Activated CD4-positive, alpha-beta memory T cell treated with anti-CD3 and anti-CD28 coated beads, Interleukin-2, amount 10 ng/mL, durations not matched to agents 7 days and 5 days (primary cell): ENCODE measurements at regions of chr14 and their contacts with region 1.

Region 1: GRCh38 chr14:103899316-103899715 is 28.9 kb upstream of the TDRD9 start:
- DNase-seq: no peak
- H3K4me3 Mint-ChIP-seq: no peak overlapping the region
- H3K27ac Mint-ChIP-seq: no peak overlapping the region
- H3K4me1 Mint-ChIP-seq: peaks cover 3% of the 10 kb centered on the region
- H3K27me3 Mint-ChIP-seq: no peaks in the 10 kb centered on the region

Region 2: GRCh38 chr14:103808403-103809001 is 90.8 kb before region 1 on chr14:
- CTCF ChIA-PET with region 1: interaction called, 30 read pairs
- POLR2A ChIA-PET with region 1: no interaction called
- DNase-seq: peak; percentile 66
- H3K4me3 Mint-ChIP-seq: no peak overlapping the region
- H3K27ac Mint-ChIP-seq: no peak overlapping the region
- H3K4me1 Mint-ChIP-seq: peaks cover 13% of the 10 kb centered on the region
- H3K27me3 Mint-ChIP-seq: no peaks in the 10 kb centered on the region

Region 3: DNA sequence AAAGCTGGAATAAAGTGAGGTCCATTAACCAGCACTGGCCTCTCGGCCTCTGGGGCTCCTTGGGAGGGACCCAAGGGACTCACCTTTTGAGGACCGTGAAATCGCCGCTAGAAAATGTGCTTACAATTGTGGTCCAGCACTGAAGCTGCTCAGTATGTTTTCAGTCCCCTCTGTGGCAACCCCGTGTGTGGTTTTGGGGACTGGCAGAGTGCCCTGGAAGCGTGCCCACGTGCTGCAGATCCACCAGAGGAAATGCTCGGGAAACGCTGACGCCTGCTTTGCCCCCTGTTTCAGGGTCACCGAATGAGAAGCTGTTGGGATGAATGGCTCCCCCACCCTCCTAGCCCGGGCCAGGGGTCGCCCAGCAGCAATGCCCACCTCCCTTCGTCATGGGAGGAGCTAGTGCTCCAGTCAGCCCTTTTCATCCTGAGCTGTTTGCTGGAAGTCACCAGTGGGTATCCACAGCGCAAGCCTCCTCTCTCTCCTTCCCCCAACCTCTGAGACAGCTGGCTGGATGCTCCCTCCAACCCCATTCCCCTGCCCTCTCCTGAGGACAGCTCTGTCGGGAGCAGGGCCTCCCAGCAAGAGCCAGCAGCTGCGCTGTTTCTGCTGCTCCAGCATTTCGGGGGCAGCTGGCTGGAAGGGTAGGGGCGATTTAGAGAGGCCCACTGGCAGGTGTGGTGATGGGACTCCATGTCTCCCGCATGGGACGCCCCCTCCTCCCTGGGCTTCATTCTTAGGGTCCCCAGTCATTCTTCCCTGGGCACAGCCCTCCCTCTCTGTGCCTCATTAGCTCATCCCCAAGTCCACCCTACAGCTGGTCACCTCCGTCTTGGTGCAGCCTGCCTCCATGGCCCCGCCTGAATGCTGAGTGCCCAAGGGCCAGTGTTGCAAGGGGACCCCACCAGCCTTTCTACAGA is 18.7 kb before region 1 on chr14:
- CTCF ChIA-PET with region 1: interaction called, 20 read pairs
- POLR2A ChIA-PET with region 1: no interaction called
- DNase-seq: no peak
- H3K4me3 Mint-ChIP-seq: no peak overlapping the region
- H3K27ac Mint-ChIP-seq: no peak overlapping the region
- H3K4me1 Mint-ChIP-seq: peaks cover 9% of the 10 kb centered on the region
- H3K27me3 Mint-ChIP-seq: no peaks in the 10 kb centered on the region

Region 4: DNA sequence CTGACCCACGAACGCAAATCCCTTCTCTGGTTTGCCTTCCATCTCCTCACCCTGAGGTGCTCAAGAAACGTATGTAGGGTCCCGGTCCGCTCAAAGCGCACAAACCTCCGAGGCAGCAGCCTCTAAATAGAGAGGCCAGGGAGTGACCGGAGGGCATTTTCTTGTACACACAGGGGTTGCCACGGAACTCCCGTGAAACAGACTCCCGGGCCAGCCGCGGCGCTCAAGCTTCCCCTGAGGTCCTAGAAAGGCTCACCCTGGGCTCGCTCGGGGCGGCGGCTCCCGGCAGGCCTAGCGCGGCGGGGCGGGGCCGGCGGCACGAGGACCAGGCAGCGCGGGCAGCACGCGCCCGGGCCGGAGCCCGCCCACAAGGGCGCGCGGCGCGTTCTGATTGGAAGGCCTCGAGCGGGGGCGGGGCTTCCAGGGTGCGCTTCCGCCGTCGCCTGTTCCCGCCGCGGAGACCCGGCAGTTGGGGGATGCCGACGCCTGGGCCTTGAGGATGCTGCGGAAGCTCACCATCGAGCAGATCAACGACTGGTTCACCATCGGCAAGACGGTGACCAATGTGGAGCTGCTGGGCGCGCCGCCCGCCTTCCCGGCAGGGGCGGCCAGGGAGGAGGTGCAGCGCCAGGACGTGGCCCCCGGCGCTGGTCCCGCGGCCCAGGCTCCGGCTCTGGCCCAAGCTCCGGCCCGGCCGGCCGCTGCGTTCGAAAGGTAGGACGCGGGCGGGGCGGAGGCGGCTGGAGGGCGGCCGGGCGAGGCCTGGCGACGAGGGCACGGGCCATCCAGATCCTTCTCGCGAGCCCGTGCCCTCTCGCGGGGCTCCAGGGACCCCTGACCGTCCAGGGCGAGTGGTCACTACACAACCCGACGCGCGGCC is 28.9 kb after region 1 on chr14 and contains the start of gene TDRD9:
- CTCF ChIA-PET with region 1: interaction called, 13 read pairs
- POLR2A ChIA-PET with region 1: no interaction called
- DNase-seq: no peak
- H3K4me3 Mint-ChIP-seq: no peak within 1 kb of the TSS
- H3K27ac Mint-ChIP-seq: no peak within 1 kb of the TSS
- H3K4me1 Mint-ChIP-seq: peaks cover 2% of the 10 kb centered on the region
- H3K27me3 Mint-ChIP-seq: peaks cover 9% of the 10 kb centered on the region
- total RNA-seq, gene TDRD9: 0.08 to 0.13 TPM